ENCODE measurements at regions of chr5 and their contacts with region 1.

Region 1: DNA sequence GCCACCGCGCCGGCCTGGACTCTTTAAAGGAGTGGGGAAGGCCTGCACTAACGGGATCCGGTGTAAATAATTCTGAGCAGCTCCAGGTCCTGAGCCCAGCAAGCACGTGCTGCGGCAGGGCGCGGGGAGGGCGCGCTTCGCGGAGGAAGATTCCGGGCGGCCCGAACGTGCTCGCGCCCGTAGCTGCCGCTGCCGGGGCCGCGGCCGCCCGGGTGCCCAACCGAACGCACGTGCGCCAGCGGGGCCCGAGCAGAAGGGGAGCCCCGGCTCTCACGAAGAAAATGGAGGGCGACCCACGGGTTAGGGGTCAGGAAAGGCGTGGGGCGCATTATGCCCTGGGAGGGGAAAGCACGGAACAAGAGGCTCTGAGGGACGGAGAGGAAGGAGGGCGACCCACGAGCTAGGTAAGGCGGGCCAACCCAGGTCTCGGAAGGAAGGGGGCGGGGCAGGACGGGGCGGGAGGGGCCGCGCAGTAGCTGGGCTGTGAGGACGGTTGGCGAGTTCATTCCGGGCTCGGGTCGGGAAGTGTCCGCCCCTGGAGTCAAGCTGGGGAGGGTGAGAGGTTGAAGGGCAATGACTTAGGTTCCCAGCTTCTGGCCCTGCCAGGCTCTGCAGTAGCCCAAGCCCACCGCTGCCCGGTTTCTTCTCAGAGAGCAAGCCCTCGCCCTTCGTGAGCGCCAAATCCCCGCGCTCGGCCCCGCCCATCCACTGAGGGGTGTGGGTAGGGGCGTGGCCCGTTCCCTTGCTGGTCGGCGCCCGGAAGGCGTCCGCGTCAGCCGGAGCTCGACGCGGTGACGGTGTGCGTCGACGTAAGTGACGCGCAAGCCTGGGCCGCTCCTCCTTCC is at the start of gene ZNF131:
- DNase-seq: peak; percentile 96
- CTCF ChIP-seq: no peak

Region 2: GRCh38 chr5:43140286-43140685 is 19.3 kb after region 1 on chr5:
- CTCF ChIA-PET with region 1: interaction called, 15 read pairs
- POLR2A ChIA-PET with region 1: interaction called, 5 read pairs
- DNase-seq: no peak
- CTCF ChIP-seq: no peak

Region 3: DNA sequence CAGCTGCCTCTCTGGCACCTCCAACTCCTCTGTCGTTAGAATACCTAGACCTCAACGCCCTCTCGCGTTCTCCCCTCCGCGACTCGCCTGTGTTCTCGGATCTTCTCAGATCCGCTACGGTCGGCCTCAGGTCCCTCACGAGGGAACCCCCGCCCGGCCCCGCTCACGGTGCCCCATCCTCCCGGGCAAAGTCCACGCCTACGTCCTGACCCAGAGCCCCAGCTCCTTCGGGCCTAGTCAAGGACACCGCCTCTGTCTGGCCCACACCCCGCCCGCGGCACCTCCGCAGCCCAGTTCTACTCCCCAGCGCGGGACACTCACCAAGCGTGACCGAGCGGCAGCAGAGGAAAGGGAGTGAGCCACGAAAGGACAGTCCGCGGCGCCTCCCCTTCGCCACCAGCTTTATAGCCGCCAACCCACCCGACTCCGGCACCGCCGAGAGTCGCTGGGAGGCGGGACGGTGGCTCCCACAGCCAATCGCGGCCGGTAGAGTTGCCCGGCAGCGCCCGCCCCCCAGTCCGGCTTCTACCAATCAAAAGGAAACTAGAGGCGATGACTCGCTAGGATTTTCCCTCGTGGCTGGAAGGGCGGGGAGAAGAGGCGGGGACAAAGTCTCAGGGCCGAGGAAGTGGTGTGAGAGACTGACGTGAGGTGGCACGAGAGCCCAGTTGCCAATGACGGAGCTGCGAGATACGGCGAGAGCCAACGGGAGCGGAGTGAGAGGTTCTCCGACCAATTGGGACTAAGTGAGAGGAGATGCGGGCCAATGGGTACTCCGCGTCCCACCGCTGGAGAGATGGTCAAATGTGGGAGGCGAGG is 192.3 kb after region 1 on chr5 and contains the start of gene HMGCS1:
- CTCF ChIA-PET with region 1: no interaction called
- POLR2A ChIA-PET with region 1: interaction called, 16 read pairs
- DNase-seq: peak; percentile 97
- CTCF ChIP-seq: no peak

Region 4: DNA sequence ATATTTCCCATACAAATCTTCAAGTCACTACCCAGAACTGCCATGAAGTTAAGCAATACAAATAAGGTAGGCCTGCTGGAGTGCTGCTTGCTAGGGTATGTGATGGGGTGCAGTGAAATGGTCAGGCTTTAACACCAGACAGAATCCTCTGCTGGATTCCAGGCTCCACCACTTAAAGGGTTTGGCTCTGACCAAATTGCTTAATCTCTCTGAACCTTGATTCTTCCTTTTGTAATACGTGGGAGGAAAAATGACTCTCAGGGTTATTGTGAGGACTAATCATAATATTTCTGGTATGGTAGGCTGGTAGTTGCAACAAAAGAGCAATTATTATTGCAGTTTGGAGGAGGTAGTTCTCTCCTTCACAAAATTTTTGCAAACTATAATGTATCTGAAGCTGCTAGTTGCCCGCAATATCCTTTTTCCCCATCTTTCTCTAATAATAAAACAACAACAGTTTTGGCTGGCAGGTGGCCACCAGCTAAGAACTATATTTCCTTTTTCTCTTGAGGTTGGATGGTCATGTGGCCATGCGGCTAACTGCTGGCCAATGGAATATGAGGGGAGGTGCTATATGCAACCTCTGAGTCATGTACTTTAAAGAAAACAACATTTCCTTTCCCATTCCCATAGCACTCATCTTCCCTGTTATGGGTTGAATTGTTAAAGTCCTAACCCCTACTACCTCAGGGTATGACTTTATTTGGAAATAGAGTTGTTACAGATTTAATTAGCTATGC is 247.1 kb after region 1 on chr5:
- CTCF ChIA-PET with region 1: no interaction called
- POLR2A ChIA-PET with region 1: no interaction called
- DNase-seq: no peak
- CTCF ChIP-seq: no peak

Measured in GM10248 (cell line).